ENCODE measurements at regions of chr13 and their contacts with region 1.

Region 1: GRCh38 chr13:113393563-113394338 is 29.8 kb upstream of the GRTP1 start:
- DNase-seq: peak; percentile 53 to 85
- H3K4me3 ChIP-seq: peak overlapping the region; percentile 59
- H3K27ac ChIP-seq: no peak overlapping the region
- H3K4me1 ChIP-seq: 0 out of 2 replicates have a peak, but pooled peaks cover 4% of the 10 kb centered on the region
- H3K27me3 ChIP-seq: peaks cover 28% of the 10 kb centered on the region
- CTCF ChIP-seq: peak; percentile 61; the same call in 1 of the 2 replicates

Region 2: DNA sequence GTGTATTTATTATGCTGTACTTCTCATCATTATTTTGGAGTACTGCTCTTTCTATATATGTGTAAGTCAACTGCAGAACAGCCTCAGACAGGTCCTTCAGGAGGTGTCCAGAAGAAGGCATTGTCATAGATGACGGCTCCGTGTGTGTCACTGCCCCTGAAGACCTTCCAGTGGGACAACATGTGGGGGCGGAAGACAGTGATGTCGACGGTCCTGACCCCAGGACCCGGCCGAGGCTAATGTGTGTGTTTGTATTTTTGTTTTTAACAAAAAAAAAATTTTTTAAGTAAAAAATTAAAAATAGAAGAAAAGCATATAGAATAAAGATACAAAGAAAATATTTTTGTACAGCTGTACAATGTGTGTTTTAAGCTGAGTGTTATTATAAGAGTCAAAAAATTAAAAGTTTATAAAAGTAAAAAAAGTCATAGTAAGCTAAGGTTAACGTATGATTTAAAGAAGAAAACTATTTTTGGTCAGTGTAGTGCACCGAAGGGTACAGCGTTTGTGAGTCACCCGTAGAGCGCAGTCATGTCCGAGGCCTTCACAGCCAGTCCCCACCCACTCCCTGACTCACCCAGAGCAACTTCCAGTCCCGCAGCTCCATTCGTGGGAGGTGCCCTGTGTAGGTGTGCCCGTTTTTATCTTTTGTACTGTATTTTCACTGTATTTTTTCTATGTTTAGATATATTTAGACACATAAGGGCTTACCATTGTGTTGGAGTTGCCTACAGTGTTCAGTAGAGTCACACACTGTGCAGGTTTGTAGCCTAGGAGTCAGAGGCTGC is 1059.8 kb before region 1 on chr13:
- CTCF ChIA-PET with region 1: no interaction called
- POLR2A ChIA-PET with region 1: no interaction called
- intact Hi-C with region 1: no loop called
- DNase-seq: peak in 1 of 2 experiments; percentile 4
- H3K4me3 ChIP-seq: no peak overlapping the region
- H3K27ac ChIP-seq: no peak overlapping the region
- H3K4me1 ChIP-seq: no peaks in the 10 kb centered on the region
- H3K27me3 ChIP-seq: peaks cover 86% of the 10 kb centered on the region
- CTCF ChIP-seq: no peak

Region 3: DNA sequence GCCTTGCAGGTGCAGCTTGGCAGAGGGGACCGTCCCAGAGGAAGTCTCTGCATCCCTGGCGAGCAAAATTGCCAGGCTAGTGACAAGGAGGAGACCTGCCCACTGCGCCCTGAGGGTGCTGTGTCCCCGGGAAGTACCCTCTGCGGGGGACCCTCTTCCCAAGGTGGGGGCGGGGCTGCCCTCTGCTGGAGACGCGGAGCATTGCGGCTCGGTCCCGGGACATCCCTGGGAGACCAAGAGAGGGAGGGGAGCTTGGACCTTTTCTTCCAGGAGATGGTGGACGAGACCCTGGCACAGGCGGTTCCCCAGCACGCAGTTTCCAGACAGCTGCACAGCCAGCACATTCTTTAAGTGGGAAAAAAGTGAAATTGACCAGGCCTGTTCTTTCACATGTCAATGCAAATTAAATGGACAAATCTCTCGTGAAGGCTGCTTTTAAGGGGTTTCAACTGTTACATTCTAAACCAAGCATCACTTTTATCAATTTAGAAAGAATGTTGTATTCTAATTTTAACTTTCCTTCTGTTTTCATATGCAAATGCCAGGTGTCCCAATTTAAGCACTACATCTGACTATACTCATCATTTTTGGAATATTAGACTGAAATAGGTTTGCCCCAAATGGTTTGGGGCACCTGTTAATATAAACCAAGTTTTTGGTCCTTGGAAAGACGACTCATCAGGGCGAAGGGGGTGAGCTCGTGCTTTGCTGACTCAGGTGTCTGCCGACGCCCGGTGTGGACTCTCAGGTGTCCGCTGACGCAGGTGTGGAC is 364.1 kb before region 1 on chr13:
- CTCF ChIA-PET with region 1: no interaction called
- POLR2A ChIA-PET with region 1: no interaction called
- intact Hi-C with region 1: loop called (anchors 2 kb)
- DNase-seq: peak in 1 of 2 experiments; percentile 64
- H3K4me3 ChIP-seq: no peak overlapping the region
- H3K27ac ChIP-seq: no peak overlapping the region
- H3K4me1 ChIP-seq: 0 out of 2 replicates have a peak, but pooled peaks cover 3% of the 10 kb centered on the region
- H3K27me3 ChIP-seq: no peaks in the 10 kb centered on the region
- CTCF ChIP-seq: peak; percentile 98

Region 4: DNA sequence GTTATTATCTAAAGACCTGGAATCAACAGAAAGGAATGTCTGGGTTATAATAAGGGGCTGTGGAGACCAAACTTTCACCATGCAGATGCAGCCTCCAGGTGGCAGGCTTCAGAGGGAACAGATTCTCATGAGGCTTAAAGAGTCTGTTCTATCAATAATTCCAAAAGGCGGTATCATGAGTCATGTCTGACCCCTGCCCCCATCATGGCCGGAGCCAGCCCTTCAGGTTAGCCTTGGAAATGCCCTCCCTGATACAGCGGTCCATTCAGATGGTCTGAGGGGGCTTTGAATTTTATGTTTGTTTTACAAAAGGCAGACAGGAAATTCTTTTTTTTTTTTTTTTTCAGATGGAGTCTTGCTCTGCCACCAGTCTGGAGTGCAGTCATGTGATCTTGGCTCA is 118.4 kb before region 1 on chr13:
- CTCF ChIA-PET with region 1: no interaction called
- POLR2A ChIA-PET with region 1: interaction called, 4 read pairs
- intact Hi-C with region 1: loop called (anchors 1 kb)
- DNase-seq: peak; percentile 52 to 77
- H3K4me3 ChIP-seq: no peak overlapping the region
- H3K27ac ChIP-seq: no peak overlapping the region
- H3K4me1 ChIP-seq: no peaks in the 10 kb centered on the region
- H3K27me3 ChIP-seq: no peaks in the 10 kb centered on the region
- CTCF ChIP-seq: peak; percentile 80

Region 5: DNA sequence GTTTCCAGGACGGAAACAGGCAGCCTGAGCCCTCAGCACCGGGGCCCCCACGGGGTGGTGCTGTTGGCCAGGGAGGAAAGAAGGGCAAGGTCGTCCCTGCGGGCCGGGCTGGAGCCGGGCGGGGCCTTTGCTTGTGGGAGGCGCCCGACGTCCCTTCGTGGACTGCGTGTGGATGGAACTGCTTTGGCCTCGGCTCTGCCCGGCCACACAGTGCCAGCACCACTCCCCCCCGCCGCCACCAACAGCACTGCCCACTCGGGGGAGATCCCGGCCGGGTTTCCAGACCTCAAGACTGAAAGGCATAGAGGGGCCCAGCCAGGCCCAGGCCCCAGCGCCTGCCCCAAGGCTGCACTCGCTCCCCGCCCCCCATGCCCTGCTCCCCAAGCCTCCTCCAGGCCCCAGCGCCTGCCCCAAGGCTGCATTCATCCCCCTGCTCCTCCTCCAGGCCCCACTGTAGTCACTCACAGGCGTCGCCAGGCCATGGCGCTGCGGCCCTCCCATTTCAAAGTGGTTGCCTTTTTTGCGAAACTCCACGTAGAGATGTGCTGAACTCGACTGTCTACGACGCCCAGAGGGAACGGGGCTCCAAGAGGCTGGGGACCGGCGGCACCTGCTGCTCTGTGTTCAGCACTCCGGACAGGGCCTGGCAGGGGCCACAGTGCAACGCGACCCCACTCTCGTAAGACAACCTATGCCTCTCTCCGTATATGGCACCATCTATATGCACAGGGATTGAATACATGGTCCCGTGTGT is 557.7 kb after region 1 on chr13:
- CTCF ChIA-PET with region 1: no interaction called
- POLR2A ChIA-PET with region 1: no interaction called
- intact Hi-C with region 1: no loop called
- DNase-seq: peak; percentile 60 to 86
- H3K4me3 ChIP-seq: no peak overlapping the region
- H3K27ac ChIP-seq: no peak overlapping the region
- H3K4me1 ChIP-seq: no peaks in the 10 kb centered on the region
- H3K27me3 ChIP-seq: no peaks in the 10 kb centered on the region
- CTCF ChIP-seq: peak; percentile 89